ENCODE measurements at regions of chr9 and their contacts with region 1.

Region 1: DNA sequence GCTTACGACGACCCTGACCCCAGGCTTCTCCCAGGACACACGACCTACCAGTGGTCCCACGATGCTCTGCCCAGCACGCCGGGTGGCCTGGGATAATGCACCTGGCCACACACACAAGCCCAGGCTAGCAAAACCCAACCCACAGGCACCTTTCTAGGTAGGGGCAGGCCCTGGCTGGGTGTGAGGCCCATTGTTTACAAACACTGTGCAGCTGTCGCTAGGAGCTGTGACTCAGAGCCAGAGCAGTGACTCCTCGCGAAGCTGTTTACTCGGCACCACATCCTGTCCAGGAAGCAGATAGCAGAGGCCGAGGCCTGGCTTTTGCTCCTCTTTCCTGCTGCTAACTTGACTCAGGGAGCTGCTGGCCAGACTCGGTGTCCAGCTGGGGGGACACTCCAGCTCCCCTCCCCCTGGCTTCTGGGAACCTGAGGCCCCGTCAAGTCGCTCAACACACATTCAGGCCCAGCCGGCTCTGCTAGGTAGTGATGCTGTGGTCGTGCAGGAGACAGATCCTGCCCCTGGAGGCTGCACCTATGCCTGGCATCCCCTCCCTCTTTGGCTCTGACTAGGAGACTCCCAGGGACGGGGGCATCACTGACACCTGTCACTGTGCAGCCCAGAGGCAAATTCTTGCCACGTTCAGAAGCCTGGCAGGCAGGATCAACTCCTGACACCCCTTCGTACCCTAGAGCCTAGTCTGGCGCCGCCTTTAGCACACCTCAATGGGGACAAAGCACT is 12.8 kb upstream of the RALGDS start:
- DNase-seq: peak; percentile 90
- H3K4me3 ChIP-seq: no peak overlapping the region
- H3K27ac ChIP-seq: peak overlapping the region; percentile 89 to 97
- H3K4me1 ChIP-seq: peaks cover 27 to 64% of the 10 kb centered on the region in 2 experiments; a peak in 3 of 4 replicates
- H3K27me3 ChIP-seq: no peaks in the 10 kb centered on the region
- CTCF ChIP-seq: no peak
- EP300 ChIP-seq: peak; percentile 48 to 81; a peak in 2 of 4 replicates
- RAD21 ChIP-seq: peak; percentile 19; the same call in 1 of the 2 replicates

Region 2: GRCh38 chr9:133103183-133103986 is 30.5 kb before region 1 on chr9:
- CTCF ChIA-PET with region 1: interaction called, 16 read pairs
- POLR2A ChIA-PET with region 1: interaction called, 3 read pairs
- DNase-seq: peak; percentile 93
- H3K4me3 ChIP-seq: no peak overlapping the region; a peak in 1 of 4 replicates
- H3K27ac ChIP-seq: peak overlapping the region in 1 of 2 experiments; percentile 50; a peak in 1 of 4 replicates
- H3K4me1 ChIP-seq: peaks cover 0 to 2% of the 10 kb centered on the region in 2 experiments; a peak in 1 of 4 replicates
- H3K27me3 ChIP-seq: no peaks in the 10 kb centered on the region
- CTCF ChIP-seq: peak; percentile 94
- EP300 ChIP-seq: no peak
- RAD21 ChIP-seq: peak; percentile 92

Region 3: GRCh38 chr9:133115448-133116345 is 18.2 kb before region 1 on chr9:
- CTCF ChIA-PET with region 1: interaction called, 59 read pairs
- POLR2A ChIA-PET with region 1: interaction called, 51 read pairs
- DNase-seq: no peak
- H3K4me3 ChIP-seq: no peak overlapping the region
- H3K27ac ChIP-seq: peak overlapping the region in 1 of 2 experiments; percentile 99; a peak in 2 of 4 replicates
- H3K4me1 ChIP-seq: peaks cover 22 to 84% of the 10 kb centered on the region in 2 experiments
- H3K27me3 ChIP-seq: no peaks in the 10 kb centered on the region
- CTCF ChIP-seq: no peak
- EP300 ChIP-seq: no peak
- RAD21 ChIP-seq: no peak

Region 4: DNA sequence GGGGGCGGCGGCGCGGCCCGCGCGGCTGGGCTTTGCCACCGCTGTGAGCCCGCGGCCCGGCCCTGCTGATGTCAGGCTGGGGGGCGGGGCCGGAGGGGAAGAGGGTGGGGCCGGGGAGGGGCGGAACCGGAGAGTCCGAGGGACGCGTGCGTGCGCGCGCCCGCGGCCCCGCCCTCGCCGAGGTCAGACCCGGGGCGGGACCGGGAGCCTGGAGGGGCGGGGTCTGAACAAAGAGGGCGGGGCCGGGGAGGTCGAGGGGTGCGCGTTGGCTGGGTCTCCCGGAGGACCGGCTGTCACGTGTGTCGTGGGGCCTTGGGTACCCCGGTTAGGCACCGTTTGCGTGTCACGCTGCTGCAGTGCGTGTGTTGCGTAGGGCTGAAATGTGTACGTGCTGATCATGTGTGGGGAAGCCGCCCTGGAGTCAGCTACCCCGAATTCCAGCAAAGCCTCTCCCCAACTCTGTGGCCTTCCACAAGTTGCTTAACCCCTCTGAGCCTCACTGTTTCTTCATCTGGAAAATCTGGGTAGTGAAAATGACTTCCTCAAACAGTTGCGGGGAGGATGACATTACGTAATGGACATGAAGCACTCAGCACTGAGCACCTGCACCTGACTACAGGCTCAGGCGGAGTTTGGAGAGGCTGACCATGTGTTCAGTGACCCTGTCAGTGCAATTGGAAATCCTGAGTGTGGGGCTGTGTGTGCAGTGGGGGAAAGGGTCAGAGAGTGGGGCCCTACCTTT is 12.5 kb before region 1 on chr9 and contains the start of gene RALGDS:
- CTCF ChIA-PET with region 1: interaction called, 59 read pairs
- POLR2A ChIA-PET with region 1: interaction called, 51 read pairs
- DNase-seq: peak; percentile 97
- H3K4me3 ChIP-seq: peak within 1 kb of the TSS; percentile 71 to 79
- H3K27ac ChIP-seq: peak within 1 kb of the TSS in 1 of 2 experiments; percentile 99; a peak in 3 of 4 replicates
- H3K4me1 ChIP-seq: peaks cover 18 to 65% of the 10 kb centered on the region in 2 experiments
- H3K27me3 ChIP-seq: no peaks in the 10 kb centered on the region
- CTCF ChIP-seq: no peak
- EP300 ChIP-seq: no peak
- RAD21 ChIP-seq: no peak
- polyA plus RNA-seq, gene RALGDS: 64.1 and 64.7 TPM in 2 replicates

Region 5: DNA sequence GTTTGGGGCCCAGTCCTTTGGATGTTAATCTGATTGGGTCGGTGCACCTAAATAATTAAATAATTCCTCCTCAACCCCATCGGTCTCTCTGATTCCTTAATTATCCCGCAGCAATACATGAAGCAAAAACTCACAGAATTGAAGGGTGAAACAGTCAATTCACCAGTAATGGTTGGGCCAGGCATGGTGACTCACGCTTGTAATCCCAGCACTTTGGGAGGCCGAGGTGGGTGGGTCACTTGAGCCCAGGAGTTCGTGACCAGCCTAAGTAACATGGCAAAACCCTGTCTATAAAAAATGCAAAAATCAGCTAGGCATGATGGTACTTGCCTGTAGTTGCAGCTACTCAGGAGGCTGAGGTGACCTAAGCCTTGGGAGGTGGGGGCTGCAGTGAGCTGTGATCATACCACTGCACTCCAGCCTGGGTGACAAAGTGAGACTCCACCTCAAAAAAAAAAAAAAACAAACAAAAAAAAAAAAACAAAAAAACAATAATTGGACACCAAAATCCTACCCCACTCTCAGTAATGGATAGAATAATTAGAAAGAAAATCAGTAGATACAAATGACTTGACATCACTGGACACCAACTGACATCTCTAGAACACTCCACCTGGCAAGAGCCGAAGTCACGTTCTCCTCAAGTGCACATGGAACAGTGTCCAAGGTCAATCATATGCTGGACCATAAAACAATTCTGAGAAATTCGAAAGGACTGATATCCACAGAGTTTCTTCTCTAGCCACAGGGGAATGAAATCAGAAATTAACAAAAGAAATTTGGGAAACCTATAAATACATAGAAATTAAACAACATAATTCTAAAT is 135.9 kb after region 1 on chr9:
- CTCF ChIA-PET with region 1: no interaction called
- POLR2A ChIA-PET with region 1: no interaction called
- DNase-seq: no peak
- H3K4me3 ChIP-seq: no peak overlapping the region
- H3K27ac ChIP-seq: no peak overlapping the region
- H3K4me1 ChIP-seq: no peaks in the 10 kb centered on the region
- H3K27me3 ChIP-seq: peaks cover 50% of the 10 kb centered on the region
- CTCF ChIP-seq: no peak
- EP300 ChIP-seq: no peak
- RAD21 ChIP-seq: no peak

Measured in SK-N-SH (cell line).